CD14-positive monocyte (primary cell): ENCODE measurements at regions of chr3 and their contacts with region 1.

Region 1: GRCh38 chr3:70658513-70659310 is 346.3 kb upstream of the MDFIC2 start:
- DNase-seq: no peak
- H3K4me3 ChIP-seq: no peak overlapping the region
- H3K4me3 Mint-ChIP-seq: no peak overlapping the region
- H3K27ac ChIP-seq: no peak overlapping the region
- H3K27ac Mint-ChIP-seq: no peak overlapping the region
- H3K4me1 ChIP-seq: no peaks in the 10 kb centered on the region
- H3K4me1 Mint-ChIP-seq: no peaks in the 10 kb centered on the region
- H3K27me3 ChIP-seq: no peaks in the 10 kb centered on the region
- H3K27me3 Mint-ChIP-seq: peaks cover 0 to 6% (median 3%) of the 10 kb centered on the region in 3 donors
- CTCF ChIP-seq: no peak

Region 2: DNA sequence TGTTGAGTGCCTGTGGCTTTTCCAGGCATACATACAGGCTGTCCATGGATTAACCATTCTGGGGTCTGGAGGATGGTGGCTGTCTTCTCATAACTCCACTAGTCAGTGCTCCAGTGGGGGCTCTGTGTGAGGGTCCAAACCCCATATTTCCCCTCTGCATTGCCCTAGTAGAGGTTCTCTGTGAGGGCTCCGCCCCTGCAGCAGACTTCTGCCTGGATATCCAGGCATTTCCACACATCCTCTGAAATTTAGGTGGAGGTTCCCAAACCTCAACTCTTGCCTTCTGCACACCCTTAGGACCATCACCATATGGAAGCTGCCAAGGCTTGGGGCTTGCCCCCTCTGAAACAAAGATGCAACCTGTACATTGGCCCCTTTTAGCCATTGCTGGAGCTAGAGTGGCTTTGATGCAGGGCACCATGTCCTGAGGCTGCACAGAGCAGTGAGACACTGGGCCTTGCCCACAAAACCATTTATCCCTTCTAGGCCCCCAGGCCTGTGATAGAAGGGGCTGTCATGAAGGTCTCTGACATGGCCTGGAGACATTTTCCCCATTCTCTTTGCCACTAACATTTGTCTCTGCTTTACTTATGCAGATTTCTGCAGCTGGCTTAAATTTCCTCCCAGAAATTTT is 53.9 kb after region 1 on chr3:
- intact Hi-C with region 1: no loop called
- DNase-seq: no peak
- H3K4me3 ChIP-seq: no peak overlapping the region
- H3K4me3 Mint-ChIP-seq: no peak overlapping the region
- H3K27ac ChIP-seq: no peak overlapping the region
- H3K27ac Mint-ChIP-seq: no peak overlapping the region
- H3K4me1 ChIP-seq: no peaks in the 10 kb centered on the region
- H3K4me1 Mint-ChIP-seq: no peaks in the 10 kb centered on the region
- H3K27me3 ChIP-seq: no peaks in the 10 kb centered on the region
- H3K27me3 Mint-ChIP-seq: no peaks in the 10 kb centered on the region
- CTCF ChIP-seq: no peak

Region 3: GRCh38 chr3:70770650-70771049 is 111.9 kb after region 1 on chr3:
- intact Hi-C with region 1: no loop called
- DNase-seq: no peak
- H3K4me3 ChIP-seq: no peak overlapping the region
- H3K4me3 Mint-ChIP-seq: no peak overlapping the region
- H3K27ac ChIP-seq: no peak overlapping the region
- H3K27ac Mint-ChIP-seq: no peak overlapping the region
- H3K4me1 ChIP-seq: no peaks in the 10 kb centered on the region
- H3K4me1 Mint-ChIP-seq: no peaks in the 10 kb centered on the region
- H3K27me3 ChIP-seq: no peaks in the 10 kb centered on the region
- H3K27me3 Mint-ChIP-seq: peaks cover 0 to 3% (median 2%) of the 10 kb centered on the region in 3 donors
- CTCF ChIP-seq: no peak

Region 4: DNA sequence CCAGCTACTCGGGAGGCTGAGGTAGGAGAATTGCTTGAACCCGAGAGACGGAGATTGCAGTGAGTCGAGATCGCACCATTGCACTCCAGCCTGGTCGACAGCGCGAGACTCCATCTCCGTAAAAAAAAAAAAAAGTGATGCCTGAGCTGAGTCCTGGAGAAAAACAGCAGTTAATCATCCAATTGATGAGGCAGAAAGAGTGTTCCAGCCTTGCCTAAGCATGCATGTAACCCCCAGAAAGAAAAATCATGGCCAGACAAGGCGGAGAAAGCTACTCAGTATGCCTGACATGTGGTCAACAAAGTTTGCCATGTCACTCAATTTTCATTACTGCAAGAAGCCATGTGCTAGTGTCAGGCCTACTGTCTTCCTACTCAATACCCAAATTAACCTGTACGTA is 246.8 kb after region 1 on chr3:
- intact Hi-C with region 1: loop called in 1 of 2 experiments (anchors 10 kb)
- DNase-seq: no peak
- H3K4me3 ChIP-seq: no peak overlapping the region
- H3K4me3 Mint-ChIP-seq: no peak overlapping the region
- H3K27ac ChIP-seq: no peak overlapping the region
- H3K27ac Mint-ChIP-seq: no peak overlapping the region
- H3K4me1 ChIP-seq: no peaks in the 10 kb centered on the region
- H3K4me1 Mint-ChIP-seq: no peaks in the 10 kb centered on the region
- H3K27me3 ChIP-seq: no peaks in the 10 kb centered on the region
- H3K27me3 Mint-ChIP-seq: peaks cover 0 to 7% (median 5%) of the 10 kb centered on the region in 3 donors
- CTCF ChIP-seq: no peak